ENCODE measurements at regions of chr2 and their contacts with region 1.

Region 1: GRCh38 chr2:109510136-109511028 is 103.4 kb downstream of the SEPTIN10 start:
- DNase-seq: no peak
- H3K4me3 ChIP-seq: no peak overlapping the region
- CTCF ChIP-seq: peak; percentile 92

Region 2: DNA sequence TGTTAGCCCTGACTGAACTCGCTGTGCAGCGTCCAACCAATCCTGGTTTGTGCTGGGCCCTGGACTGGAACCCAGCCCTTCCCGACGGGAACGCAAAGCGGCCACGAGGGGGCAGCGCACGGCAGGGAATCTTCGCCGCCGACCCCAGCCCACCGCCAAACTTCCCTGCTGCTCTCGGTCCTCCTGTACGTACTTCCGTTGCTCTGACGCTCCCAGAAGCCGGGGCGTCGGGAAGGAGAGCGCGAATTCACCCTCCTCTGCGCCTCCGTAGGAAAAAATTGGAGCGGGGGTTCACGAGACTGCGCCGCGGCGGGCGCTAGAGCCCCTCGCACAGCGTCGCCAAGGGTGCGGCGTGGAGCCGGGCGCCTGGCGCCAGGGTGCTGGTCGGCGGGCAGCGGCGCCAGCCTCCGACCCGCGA is 382.3 kb before region 1 on chr2:
- CTCF ChIA-PET with region 1: interaction called, 155 read pairs
- POLR2A ChIA-PET with region 1: interaction called, 3 read pairs
- DNase-seq: peak; percentile 42
- H3K4me3 ChIP-seq: peak overlapping the region; percentile 72
- CTCF ChIP-seq: peak; percentile 98

Region 3: DNA sequence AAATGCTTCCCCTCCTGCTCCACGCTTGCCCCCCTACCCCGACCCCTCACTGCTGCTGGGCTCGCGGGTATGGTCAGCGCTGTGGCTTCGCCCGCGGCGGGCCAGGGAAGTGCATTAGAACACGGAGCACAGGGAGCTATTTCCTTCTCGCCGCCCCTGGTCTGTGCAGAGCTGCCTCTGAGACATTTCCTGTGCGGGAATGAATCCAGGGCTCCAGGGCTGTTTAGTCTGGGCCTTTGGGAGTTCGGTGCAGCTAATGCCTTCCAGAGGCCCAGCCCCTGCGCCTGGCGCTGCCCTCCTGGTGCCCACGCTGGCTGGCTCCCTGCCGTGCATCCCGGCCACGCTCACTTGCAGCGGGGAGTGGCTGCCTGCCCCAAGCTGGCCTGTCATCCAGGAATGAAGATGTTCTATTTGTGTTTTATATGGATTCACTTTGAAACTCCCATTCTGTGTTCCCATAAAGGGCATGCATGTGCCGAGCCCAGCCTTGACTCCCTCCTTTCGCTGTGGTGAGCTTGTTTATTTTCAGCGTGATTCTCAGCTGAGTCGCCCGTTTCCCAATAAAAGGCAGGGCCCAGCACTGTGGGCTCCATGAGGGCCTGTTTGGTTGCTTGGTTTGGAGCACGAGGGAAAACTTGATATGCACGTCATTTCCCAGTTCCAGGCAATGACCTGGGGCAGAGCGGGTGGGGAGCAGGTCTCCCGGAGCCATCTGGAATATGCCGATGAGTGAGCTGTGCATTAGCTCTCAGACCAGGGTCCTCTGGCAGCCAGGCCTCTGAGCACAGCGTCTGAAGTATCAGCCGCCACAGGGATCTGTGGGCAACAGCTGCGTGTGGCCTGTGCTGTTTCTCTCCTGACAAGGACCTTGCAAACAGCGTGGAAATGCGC is 338.7 kb before region 1 on chr2:
- CTCF ChIA-PET with region 1: interaction called, 18 read pairs
- POLR2A ChIA-PET with region 1: no interaction called
- DNase-seq: peak; percentile 94
- H3K4me3 ChIP-seq: peak overlapping the region; percentile 37
- CTCF ChIP-seq: peak; percentile 50

Region 4: DNA sequence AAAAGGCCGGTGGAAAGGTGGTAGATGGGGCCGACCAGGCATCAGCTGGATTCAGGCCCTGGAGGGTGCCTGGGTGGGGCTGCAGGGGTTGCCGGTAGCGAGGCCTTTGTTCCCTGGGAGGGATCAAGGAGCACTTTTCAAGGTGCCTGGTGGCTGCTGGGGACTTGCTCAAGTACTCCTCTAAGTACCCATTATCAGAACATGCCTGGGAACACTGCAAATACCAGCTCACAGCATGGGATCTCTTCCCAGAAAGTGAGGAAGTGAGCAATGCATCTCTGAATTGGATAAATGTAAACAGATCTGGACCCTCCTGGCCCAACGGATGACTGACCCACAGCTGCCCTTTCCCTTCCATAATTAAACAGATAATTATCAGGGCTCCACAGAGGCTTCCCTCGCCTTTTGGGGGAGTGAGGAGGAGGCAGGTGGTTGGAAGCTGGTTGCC is 170.8 kb before region 1 on chr2:
- CTCF ChIA-PET with region 1: interaction called, 21 read pairs
- POLR2A ChIA-PET with region 1: no interaction called
- DNase-seq: no peak
- H3K4me3 ChIP-seq: no peak overlapping the region
- CTCF ChIP-seq: no peak

Region 5: GRCh38 chr2:109415581-109416013 is 94.8 kb before region 1 on chr2:
- CTCF ChIA-PET with region 1: no interaction called
- POLR2A ChIA-PET with region 1: no interaction called
- DNase-seq: no peak
- H3K4me3 ChIP-seq: no peak overlapping the region
- CTCF ChIP-seq: no peak

Region 6: GRCh38 chr2:109486711-109487535 is 23.5 kb before region 1 on chr2:
- CTCF ChIA-PET with region 1: interaction called, 12 read pairs
- POLR2A ChIA-PET with region 1: no interaction called
- DNase-seq: peak; percentile 59
- H3K4me3 ChIP-seq: no peak overlapping the region
- CTCF ChIP-seq: no peak

Region 7: GRCh38 chr2:109523536-109524361 is 13.4 kb after region 1 on chr2:
- CTCF ChIA-PET with region 1: interaction called, 19 read pairs
- POLR2A ChIA-PET with region 1: no interaction called
- DNase-seq: no peak
- H3K4me3 ChIP-seq: no peak overlapping the region
- CTCF ChIP-seq: no peak